K562 (cell line): ENCODE measurements at regions of chr14 and their contacts with region 1.

Region 1: GRCh38 chr14:50773632-50774541 is 57.1 kb downstream of the NIN start:
- DNase-seq: peak; percentile 51 to 62 (median 61)
- ATAC-seq: peak; percentile 93
- H3K4me3 ChIP-seq: no peak overlapping the region
- H3K27ac ChIP-seq: no peak overlapping the region
- H3K4me1 ChIP-seq: no peaks in the 10 kb centered on the region; a peak in 1 of 5 replicates
- H3K27me3 ChIP-seq: no peaks in the 10 kb centered on the region
- CTCF ChIP-seq: peak; percentile 75 to 87 (median 82)
- EP300 ChIP-seq: no peak
- POLR2A ChIP-seq: no peak
- RAD21 ChIP-seq: peak; percentile 55 to 74

Region 2: DNA sequence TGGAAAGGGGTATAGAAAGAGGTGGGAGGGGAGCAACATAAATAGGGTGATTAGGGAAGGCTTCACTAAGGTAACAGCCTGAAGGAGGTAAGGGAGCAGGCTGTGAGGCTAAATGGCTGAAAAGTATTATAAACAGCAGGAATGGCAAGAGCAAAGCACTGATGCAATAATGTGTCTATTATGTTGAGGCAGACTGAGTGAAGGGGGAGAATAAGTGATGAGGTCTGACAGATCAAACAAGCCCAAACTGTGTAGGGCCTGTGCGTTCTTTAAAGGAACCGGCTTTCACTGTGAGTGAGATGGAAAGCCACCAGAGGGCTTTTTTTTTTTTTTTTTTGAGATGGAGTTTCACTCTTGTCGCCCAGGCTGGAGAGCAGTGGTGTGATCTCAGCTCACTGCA is 650.8 kb before region 1 on chr14:
- CTCF ChIA-PET with region 1: no interaction called
- POLR2A ChIA-PET with region 1: no interaction called
- in situ Hi-C with region 1: loop called (anchors 10 kb)
- intact Hi-C with region 1: no loop called
- DNase-seq: no peak
- ATAC-seq: no peak
- H3K4me3 ChIP-seq: no peak overlapping the region
- H3K27ac ChIP-seq: no peak overlapping the region
- H3K4me1 ChIP-seq: no peaks in the 10 kb centered on the region
- H3K27me3 ChIP-seq: no peaks in the 10 kb centered on the region
- CTCF ChIP-seq: no peak
- EP300 ChIP-seq: no peak
- POLR2A ChIP-seq: no peak
- RAD21 ChIP-seq: no peak

Region 3: DNA sequence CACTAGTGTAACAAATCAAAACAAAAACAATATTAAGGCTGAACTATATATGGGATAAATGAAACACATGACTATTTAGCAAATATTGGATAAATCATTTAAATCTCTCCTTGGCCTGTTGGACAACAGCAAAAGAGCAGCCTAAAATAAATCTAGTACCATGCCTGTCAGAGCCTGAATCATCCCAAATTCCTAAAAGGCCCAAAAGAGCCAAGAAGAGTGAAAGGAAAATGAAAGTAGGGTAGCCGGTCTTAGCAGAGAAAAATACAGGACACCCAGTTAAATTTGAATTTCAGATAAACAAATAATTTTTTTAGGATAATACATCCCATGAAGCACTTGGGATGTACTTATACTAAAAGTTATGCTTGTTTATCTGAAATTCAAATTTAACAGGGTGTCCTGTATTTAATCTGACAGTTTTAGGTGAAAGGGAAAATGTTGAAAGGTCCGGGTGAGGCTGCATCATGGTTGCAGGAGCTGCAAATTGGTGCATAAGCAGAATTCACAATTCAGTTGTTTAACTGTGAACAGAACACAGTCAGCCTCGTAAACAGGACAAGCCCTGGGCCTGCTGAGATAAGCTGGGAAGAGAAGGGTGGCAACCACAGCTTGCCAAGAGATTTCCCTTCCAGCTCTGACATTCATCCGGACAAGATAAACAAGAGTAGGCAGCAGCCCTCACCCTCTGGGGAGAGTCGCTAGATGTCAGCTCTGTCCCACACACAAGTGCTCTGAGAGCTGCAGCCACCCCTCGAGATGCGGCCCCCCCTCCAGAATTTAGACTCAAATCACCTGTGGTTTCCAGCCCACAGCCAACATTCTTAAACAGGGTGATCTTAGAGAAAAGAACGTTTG is 431.4 kb before region 1 on chr14:
- CTCF ChIA-PET with region 1: interaction called, 3 read pairs
- POLR2A ChIA-PET with region 1: no interaction called
- in situ Hi-C with region 1: loop called (anchors 25 kb)
- intact Hi-C with region 1: loop called (anchors 2 kb)
- DNase-seq: peak; percentile 43 to 90 (median 70)
- ATAC-seq: peak; percentile 97
- H3K4me3 ChIP-seq: no peak overlapping the region
- H3K27ac ChIP-seq: peak overlapping the region; percentile 45; the same call in 1 of the 3 replicates
- H3K4me1 ChIP-seq: peaks cover 0 to 22% of the 10 kb centered on the region in 2 experiments; a peak in 3 of 5 replicates
- H3K27me3 ChIP-seq: no peaks in the 10 kb centered on the region
- CTCF ChIP-seq: peak; percentile 72 to 84 (median 74)
- EP300 ChIP-seq: peak; percentile 73; the same call in 1 of the 2 replicates
- POLR2A ChIP-seq: no peak
- RAD21 ChIP-seq: peak; percentile 90

Region 4: DNA sequence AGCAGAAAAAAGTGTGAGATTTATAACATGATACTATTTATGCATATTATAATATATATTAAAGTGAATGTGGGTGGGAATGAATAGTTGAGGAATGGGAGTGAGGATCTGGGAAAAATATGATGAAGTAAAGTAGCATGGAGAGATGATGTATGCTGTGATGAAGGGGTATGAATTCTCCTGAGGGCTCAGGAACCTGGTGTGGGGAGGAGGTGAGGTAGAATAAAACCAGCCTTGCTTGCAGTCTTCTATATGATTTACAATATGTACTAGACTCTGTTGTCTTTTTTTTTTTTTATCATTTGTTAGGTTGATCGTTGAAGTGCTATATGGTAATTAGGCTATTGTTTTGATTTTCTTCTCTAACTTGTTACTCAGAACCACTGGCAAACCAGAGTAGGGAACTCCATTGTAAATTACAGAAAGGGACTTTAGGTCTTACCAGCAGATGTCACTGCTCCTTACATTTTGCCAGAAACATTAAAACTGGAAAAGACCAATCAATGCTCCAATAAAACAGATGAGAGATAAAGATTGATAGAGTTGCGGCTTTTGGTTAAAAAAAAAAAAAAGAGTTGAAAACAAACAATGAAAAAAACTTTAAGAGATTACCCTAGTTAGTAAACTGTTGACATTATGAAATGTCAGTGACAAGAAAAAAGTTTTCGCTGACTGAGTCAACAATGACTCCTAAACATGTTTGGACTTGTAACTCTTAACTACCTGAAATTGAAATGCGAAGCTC is 174.0 kb before region 1 on chr14:
- CTCF ChIA-PET with region 1: interaction called, 16 read pairs
- POLR2A ChIA-PET with region 1: no interaction called
- in situ Hi-C with region 1: no loop called
- intact Hi-C with region 1: loop called (anchors 1 kb)
- DNase-seq: peak in 2 of 4 experiments; percentile 6 to 23
- ATAC-seq: peak; percentile 61; the same call in 1 of the 3 replicates
- H3K4me3 ChIP-seq: no peak overlapping the region
- H3K27ac ChIP-seq: no peak overlapping the region
- H3K4me1 ChIP-seq: no peaks in the 10 kb centered on the region; a peak in 1 of 5 replicates
- H3K27me3 ChIP-seq: no peaks in the 10 kb centered on the region; a peak in 1 of 5 replicates
- CTCF ChIP-seq: peak; percentile 31 to 59 (median 47); a peak in 3 of 6 replicates
- EP300 ChIP-seq: no peak
- POLR2A ChIP-seq: no peak
- RAD21 ChIP-seq: peak; percentile 39 to 70

Region 5: DNA sequence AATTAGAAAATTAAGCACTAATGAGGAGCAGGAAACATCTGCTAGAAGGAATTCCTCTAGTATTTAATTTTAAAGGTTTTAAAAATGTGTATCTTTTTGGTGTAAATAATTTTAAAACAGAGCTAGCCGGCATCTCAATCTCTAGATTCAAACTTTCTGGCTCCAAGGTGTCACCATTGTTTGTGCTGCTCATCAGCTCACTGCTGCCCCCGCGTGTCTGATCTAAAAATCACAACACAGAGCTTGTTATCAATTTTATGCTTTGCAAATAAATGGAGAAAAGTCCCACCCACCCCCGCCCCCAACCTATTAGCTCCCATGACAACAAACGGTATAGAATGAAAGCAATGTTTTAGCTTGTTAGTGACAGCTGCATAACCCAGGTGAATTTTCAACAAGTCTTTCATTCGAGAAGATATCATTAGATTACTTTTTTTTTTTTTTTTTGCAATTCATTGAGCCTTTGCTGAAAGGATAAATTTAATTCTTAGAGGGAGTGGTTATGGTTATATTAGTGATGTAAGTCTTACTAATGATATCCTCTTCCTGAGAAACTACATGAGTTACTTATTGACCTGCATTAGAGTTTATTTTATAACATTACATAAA is 86.7 kb after region 1 on chr14:
- CTCF ChIA-PET with region 1: no interaction called
- POLR2A ChIA-PET with region 1: no interaction called
- in situ Hi-C with region 1: no loop called
- intact Hi-C with region 1: loop called (anchors 5 kb)
- DNase-seq: peak; percentile 54 to 75 (median 68)
- ATAC-seq: peak; percentile 76
- H3K4me3 ChIP-seq: no peak overlapping the region
- H3K27ac ChIP-seq: no peak overlapping the region
- H3K4me1 ChIP-seq: no peaks in the 10 kb centered on the region; a peak in 1 of 5 replicates
- H3K27me3 ChIP-seq: peaks cover under 1 to 7% of the 10 kb centered on the region in 2 experiments; a peak in 1 of 5 replicates
- CTCF ChIP-seq: peak; percentile 53 to 63 (median 60)
- EP300 ChIP-seq: no peak
- POLR2A ChIP-seq: no peak
- RAD21 ChIP-seq: peak; percentile 50 to 51

Region 6: DNA sequence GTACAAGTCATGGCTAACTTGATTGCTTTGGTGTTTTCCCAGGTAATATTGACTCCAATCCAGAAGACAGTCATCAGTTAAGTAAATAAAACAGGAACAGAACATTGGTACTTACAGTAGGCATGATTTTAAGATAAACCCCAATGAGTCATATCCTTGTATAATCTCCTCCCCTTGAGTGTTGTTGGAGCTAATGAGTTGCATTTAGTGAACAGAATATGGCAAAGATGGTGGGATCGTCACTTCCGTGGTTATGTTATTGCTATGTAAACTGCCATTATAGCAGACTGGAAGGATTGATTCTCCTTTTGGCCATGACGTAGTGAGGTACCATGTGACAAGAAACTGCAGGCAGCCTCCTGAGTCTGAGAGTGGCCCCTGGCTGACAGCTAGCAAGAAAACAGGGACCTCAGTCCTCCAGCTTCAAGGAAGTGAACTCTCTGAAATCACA is 568.4 kb after region 1 on chr14:
- CTCF ChIA-PET with region 1: no interaction called
- POLR2A ChIA-PET with region 1: no interaction called
- in situ Hi-C with region 1: no loop called
- intact Hi-C with region 1: no loop called
- DNase-seq: peak in 1 of 4 experiments; percentile 1
- ATAC-seq: no peak
- H3K4me3 ChIP-seq: no peak overlapping the region
- H3K27ac ChIP-seq: no peak overlapping the region
- H3K4me1 ChIP-seq: no peaks in the 10 kb centered on the region
- H3K27me3 ChIP-seq: no peaks in the 10 kb centered on the region
- CTCF ChIP-seq: no peak
- EP300 ChIP-seq: no peak
- POLR2A ChIP-seq: no peak
- RAD21 ChIP-seq: no peak